Posterior cingulate gyrus (tissue), 11 donors: ENCODE measurements at regions of chr6 and their contacts with region 1.

Region 1: DNA sequence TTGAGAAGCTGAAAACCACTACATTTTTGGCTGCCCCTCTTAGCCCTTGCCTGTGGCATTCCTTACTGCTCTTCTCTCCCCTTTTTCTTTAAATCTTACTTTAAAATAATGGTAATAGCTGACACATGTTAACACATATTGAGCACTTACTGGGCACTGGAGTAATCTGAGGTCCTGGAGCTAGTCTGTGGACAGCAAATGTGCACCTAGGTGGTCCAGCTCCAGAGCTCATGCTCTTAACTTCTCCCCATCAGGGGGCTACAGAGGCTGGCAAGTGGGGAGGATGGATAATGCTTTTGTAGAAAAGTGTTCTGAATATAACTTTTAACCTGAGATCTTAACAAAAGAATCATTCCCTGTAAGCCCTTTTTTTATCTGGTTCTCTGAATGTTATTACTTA is 74.8 kb downstream of the ADGRB3 start:
- DNase-seq: peak in 2 of 10 donors; percentile 12 to 39

Region 2: DNA sequence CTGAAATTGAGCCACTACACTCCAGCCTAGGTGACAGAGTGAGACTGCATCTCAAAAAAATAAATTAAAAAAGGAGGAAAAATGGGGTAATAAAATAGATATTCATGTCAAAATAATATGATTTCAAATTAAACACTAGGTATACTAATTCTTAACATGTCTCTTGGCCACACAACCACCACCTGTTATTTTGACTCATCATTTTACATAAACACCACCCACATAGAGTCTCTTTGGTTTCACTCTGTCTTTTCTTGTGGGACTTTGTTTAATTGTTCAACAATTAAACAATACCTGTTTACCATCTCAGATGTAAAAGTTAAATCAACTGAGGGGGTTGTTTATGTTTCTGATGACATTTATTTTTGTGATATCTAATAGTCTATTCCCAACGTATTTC is 551.6 kb before region 1 on chr6:
- intact Hi-C with region 1: no loop called
- DNase-seq: no peak

Region 3: DNA sequence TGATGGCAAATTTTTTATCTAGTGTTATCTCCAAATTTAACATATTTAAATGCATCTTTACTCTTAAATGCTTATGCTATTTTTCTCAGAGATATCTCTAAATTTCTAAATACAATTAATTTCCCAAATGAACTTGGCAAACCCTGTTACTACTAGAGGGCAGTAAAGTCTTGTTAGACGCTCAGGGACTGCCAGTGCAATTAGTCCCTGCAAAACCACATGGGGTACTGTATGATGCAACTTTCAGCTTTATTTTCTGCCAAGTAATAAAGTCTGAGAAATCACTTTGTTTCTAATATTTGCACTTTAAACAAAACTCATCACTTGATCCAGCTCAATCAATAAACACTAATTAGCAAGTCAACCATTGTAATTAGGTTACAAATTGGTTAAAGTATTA is 150.8 kb before region 1 on chr6:
- intact Hi-C with region 1: no loop called
- DNase-seq: no peak

Region 4: GRCh38 chr6:68657374-68658139 is 52.3 kb before region 1 on chr6:
- intact Hi-C with region 1: loop called (anchors 5 kb)
- DNase-seq: no peak

Region 5: GRCh38 chr6:68728159-68728979 is 18.5 kb after region 1 on chr6:
- intact Hi-C with region 1: loop called (anchors 2 kb)
- DNase-seq: no peak